IMR-90 (cell line): ENCODE measurements at regions of chr10 and their contacts with region 1.

Region 1: DNA sequence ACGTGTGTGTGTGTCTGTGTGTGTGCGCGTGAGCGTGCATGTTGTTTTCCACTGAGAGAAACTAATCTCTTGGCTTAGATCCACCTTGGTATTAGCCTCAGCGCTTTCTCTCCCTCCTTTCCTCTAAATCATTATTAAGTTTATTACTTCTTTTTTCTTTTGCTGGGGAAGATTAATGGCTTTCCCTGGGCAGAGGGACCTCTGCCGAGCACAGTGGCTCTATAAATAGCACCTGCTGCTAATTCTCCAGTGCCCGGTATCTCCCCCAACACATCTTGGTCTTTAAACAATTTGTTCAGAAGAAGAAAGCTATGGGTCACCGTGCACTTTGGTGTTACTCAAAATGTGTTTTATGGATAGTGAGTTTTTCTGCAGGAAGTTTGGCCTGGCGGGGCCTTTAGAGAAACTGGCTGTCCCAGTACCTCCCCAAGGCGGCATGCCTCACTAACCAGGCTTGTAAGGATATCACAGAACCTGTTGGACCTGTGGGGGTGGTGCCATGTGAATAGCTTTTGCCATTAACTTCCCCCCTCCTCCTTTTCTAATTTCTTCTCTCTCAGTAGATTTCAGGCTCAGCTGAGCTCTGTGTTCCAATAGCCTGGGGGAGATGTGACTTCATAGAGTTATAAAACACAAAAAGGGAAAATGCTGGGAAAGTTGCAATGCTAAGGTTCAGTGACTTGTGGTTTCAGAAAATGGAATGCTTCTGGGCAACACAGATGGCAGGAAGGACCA is 70.1 kb upstream of the RAB11FIP2 start:
- DNase-seq: no peak
- ATAC-seq: no peak
- H3K4me3 ChIP-seq: no peak overlapping the region
- H3K27ac ChIP-seq: no peak overlapping the region
- H3K4me1 ChIP-seq: no peaks in the 10 kb centered on the region
- H3K27me3 ChIP-seq: no peaks in the 10 kb centered on the region
- CTCF ChIP-seq: no peak
- POLR2A ChIP-seq: no peak
- RAD21 ChIP-seq: no peak

Region 2: DNA sequence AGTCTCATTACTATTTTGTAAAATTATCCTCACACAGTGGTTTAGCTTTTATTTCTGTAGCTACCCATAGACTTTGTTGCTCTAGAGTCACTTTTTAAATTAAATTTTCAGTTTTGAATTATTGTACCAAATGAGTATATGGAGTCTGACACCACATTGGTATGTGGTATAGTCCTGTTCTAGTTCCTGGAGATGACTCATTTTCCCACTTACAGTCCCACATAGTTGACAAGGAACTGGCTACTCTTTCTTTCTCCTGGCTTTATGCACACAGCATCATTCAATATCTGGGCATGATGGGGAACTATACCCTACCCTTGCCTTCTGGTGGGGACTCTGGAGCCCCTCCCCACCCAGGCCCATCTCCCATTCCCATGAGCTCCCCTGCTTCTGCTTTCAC is 22.4 kb after region 1 on chr10:
- CTCF ChIA-PET with region 1: no interaction called
- POLR2A ChIA-PET with region 1: interaction called, 10 read pairs
- dilution Hi-C with region 1: no loop called
- in situ Hi-C with region 1: no loop called
- intact Hi-C with region 1: no loop called
- DNase-seq: no peak
- ATAC-seq: no peak
- H3K4me3 ChIP-seq: no peak overlapping the region
- H3K27ac ChIP-seq: no peak overlapping the region
- H3K4me1 ChIP-seq: no peaks in the 10 kb centered on the region
- H3K27me3 ChIP-seq: no peaks in the 10 kb centered on the region
- CTCF ChIP-seq: no peak
- POLR2A ChIP-seq: no peak
- RAD21 ChIP-seq: no peak